OCI-LY7 (cell line): ENCODE measurements at regions of chr14 and their contacts with region 1.

Region 1: DNA sequence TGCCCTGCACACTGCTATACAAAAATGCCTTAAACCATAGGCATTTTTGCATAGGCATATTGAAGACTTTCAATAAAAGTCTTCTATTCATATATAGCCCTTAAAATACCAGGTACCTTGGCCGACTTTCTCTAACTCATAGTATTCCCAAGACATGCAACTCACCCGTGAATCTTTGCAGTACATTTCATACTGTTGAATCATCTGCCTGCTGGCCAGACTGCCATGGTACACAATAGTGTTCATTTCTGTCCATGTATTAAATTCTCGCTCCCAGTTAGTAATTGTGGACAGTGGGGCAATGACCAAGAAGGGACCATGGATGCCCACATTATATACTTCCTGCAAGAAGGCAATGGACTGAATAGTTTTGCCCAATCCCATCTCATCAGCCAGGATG is 24.3 kb upstream of the SUPT16H start:
- DNase-seq: no peak
- H3K4me3 ChIP-seq: no peak overlapping the region
- H3K27ac ChIP-seq: no peak overlapping the region
- H3K4me1 ChIP-seq: no peaks in the 10 kb centered on the region
- CTCF ChIP-seq: no peak

Region 2: GRCh38 chr14:21367582-21368144 is 40.5 kb before region 1 on chr14:
- CTCF ChIA-PET with region 1: no interaction called
- POLR2A ChIA-PET with region 1: interaction called, 3 read pairs
- intact Hi-C with region 1: loop called (anchors 5 kb)
- DNase-seq: no peak
- H3K4me3 ChIP-seq: no peak overlapping the region
- H3K27ac ChIP-seq: no peak overlapping the region
- H3K4me1 ChIP-seq: no peaks in the 10 kb centered on the region
- CTCF ChIP-seq: no peak

Region 3: DNA sequence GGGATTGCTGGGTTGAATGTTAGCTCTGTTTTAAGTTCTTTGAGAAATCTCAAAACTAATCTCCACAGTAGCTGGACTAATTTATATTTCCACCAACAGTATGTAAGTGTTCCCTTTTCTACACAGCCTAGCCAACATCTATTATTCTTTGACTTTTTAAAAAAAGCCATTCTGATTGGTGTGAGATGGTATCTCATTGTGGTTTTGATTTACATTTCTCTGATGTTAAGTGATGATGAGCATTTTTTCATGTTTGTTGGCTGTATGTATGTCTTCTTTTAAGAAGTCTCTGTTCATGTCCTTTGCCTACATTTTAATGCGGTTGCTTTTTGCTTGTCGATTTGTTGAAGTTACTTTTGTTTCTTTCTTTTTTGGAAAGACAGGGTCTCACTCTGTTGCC is 566.6 kb after region 1 on chr14:
- CTCF ChIA-PET with region 1: no interaction called
- POLR2A ChIA-PET with region 1: no interaction called
- intact Hi-C with region 1: no loop called
- DNase-seq: no peak
- H3K4me3 ChIP-seq: no peak overlapping the region
- H3K27ac ChIP-seq: no peak overlapping the region
- H3K4me1 ChIP-seq: no peaks in the 10 kb centered on the region
- CTCF ChIP-seq: no peak